AG04449 (cell line): ENCODE measurements at regions of chr11 and their contacts with region 1.

Region 1: DNA sequence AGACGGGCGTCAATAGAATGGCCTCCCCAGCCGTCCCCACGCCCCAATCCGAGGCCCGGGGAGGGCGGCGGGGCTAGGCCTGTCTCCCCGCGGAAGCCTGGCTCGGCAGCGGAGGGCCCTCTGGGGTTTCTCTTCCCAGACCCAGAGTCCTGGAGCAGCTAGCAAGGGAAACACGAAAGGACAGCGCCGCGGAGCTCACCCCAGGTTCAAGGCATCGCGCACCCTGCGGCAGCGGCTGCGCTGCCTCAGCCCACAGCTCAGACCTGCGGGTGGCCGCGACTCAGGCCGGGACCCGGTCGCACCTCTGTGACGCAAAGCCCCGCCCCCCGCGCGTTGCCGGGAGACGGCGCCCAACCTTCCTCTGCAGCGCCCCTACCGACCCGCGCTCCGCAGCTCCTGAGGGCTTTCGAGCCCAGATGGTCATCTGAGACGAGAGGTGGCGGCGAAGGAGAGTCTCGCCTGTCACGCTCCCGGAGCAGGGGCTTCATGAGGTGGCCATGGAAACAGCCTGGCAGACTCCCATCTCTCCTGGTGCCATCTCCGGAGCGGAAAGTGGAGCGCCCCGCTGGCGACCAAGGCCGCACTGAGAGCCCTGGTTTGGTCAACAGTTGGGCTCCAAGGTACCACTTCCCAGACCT is at the start of gene RNF141:
- DNase-seq: no peak
- H3K4me3 ChIP-seq: peak within 1 kb of the TSS; percentile 79
- CTCF ChIP-seq: peak; percentile 97

Region 2: GRCh38 chr11:9302448-9302847 is 1238.6 kb before region 1 on chr11:
- CTCF ChIA-PET with region 1: no interaction called
- POLR2A ChIA-PET with region 1: no interaction called
- DNase-seq: peak; percentile 5
- H3K4me3 ChIP-seq: no peak overlapping the region
- CTCF ChIP-seq: no peak

Region 3: DNA sequence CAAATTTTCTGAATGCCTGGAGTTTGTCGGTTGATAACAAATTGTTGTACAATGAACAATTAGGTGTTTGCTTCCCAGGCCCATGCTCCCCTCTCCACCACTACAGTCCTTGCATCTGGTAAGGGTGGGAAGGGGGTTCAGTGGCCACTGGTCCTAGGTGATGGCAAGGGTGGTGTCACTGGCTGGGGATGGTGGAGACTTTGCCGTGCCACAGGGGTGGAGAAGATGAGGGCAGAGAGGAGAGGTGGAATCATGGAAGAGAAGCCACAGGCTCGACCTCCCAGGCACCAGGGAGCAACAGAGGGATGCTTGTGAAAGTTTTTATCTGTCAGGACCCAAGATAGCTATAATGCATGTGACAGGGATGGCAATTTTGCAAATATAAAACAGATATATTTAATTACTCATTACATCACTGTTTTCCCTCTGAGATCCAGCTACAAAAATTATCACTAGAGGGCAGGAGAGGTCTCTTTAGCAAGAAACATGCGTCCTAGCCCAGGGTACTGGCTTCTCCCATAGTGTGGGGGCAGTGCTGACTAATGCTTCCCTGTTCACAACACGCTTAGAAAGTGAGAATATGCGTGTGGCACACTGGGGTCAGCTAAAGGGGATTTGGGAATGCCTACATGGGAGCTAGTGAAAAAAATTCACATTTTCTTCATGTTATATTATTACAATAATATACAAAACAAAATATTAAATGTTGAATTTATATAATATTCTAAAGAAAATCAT is 135.0 kb before region 1 on chr11:
- CTCF ChIA-PET with region 1: interaction called, 14 read pairs
- POLR2A ChIA-PET with region 1: interaction called, 3 read pairs
- DNase-seq: peak; percentile 52
- H3K4me3 ChIP-seq: no peak overlapping the region
- CTCF ChIP-seq: peak; percentile 62

Region 4: DNA sequence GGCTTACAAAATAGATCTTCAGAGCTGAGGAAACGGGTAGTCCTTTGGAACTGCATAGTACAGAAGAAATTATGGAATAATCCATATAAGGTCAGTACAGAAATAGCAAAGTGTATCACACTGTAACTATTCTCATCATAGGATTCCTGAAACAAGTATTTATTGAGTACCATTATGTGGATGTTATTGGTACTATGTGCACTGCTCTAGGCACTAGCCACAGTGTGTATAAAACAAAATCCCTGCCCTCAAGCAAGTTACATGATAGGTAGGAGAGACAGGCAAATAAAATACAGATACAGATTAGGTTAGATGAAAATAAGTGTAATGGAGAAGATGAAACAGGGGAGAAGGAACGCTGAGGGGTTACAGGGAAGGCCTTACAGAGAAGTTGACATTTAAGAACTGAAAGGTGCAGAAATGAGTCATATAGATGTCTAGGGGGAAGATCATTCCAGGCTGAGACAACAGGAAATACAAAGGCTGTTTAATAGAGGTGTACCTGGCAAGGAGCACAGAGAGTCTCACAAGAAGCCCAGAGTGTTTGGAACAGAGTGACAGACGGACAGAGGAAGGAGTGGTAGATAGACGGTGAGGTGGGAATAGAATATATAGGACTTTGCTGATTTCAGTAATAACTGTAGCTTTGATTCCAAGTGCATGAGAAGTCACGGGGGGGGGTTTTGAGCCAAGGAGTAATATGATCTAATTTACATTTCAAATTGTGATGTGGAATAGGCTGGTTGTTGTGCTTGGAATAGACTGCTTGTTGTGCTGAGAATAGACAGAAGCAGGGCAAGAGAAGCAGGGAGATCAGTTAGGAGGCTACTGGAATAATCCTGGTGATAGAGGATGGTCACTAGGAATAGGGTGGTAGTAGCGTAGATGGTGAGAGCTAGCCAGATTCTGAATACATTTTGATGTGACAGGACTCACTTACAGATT is 13.8 kb before region 1 on chr11:
- CTCF ChIA-PET with region 1: interaction called, 57 read pairs
- POLR2A ChIA-PET with region 1: interaction called, 5 read pairs
- DNase-seq: no peak
- H3K4me3 ChIP-seq: no peak overlapping the region
- CTCF ChIP-seq: no peak

Region 5: DNA sequence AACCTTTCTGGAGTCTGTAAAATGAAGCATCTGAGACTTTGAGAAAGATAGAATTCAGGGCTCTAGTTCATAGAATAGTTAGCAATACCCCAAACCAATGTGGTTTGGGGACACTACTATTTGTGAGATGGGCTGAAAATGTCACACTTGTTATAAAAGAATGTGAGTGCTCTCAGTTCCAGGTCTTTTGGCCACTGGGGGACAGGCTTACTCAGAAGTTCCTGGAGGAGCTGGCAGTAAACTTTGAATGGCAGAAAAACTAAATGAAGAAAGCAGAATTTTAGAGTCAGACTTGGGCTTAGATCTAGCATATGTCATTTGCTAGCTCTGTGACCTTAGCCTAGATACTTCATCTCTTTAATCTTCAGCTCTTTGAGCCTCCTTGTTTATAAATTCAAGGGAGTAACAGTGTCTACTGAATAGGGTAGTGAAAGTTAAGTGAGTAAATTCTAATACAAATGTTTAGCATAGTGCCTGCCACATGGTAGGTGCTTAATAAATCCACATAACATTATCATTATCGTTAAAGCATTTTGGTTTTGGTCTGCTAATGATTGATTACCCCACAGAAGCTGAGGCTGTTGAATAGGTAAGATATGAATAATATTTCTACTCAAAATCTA is 23.8 kb after region 1 on chr11:
- CTCF ChIA-PET with region 1: interaction called, 33 read pairs
- POLR2A ChIA-PET with region 1: no interaction called
- DNase-seq: no peak
- H3K4me3 ChIP-seq: no peak overlapping the region
- CTCF ChIP-seq: peak; percentile 32

Region 6: GRCh38 chr11:10653926-10654810 is 113.1 kb after region 1 on chr11:
- CTCF ChIA-PET with region 1: interaction called, 30 read pairs
- POLR2A ChIA-PET with region 1: no interaction called
- DNase-seq: no peak
- H3K4me3 ChIP-seq: no peak overlapping the region
- CTCF ChIP-seq: no peak

Region 7: GRCh38 chr11:10735481-10736475 is 194.7 kb after region 1 on chr11:
- CTCF ChIA-PET with region 1: interaction called, 14 read pairs
- POLR2A ChIA-PET with region 1: no interaction called
- DNase-seq: peak; percentile 87
- H3K4me3 ChIP-seq: peak overlapping the region; percentile 50
- CTCF ChIP-seq: peak; percentile 94

Region 8: GRCh38 chr11:10844356-10844755 is 303.3 kb after region 1 on chr11:
- CTCF ChIA-PET with region 1: no interaction called
- POLR2A ChIA-PET with region 1: no interaction called
- DNase-seq: no peak
- H3K4me3 ChIP-seq: no peak overlapping the region
- CTCF ChIP-seq: no peak